CD14-positive monocyte (primary cell): ENCODE measurements at regions of chr13 and their contacts with region 1.

Region 1: DNA sequence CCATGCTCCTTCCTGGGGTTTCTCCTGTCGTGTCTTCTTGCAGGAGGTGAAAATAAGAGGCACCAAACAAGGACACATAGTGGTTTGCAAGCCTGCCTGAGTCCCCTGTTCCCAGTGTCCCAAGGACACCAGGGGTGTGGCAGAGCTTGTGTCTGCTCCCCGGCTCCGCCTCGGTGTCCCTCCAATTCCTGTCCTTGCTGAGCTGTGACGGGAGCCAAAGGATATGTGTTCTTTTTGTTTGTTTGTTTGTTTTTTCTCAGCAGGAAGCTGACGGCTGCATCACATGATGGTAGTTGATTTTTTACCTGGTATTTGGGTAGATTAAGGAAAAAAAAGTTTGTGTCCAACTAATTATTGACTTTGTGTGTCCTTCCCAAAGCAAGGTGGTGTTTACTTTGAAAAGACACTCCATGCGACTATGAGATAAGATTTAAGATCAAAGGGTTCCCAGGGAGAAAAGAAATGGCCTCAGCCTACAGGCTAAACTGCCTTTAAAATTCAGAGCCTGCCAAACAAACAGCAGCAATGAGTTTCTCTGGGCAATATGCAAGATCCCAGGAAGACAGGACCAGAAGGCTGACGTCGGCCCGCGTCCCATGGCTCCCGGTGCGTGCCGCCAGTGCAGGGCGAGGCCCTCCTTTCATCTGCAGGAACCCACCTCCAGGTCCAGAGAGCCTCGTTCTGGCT is 50.8 kb upstream of the XPO4 start:
- DNase-seq: no peak
- H3K4me3 ChIP-seq: no peak overlapping the region
- H3K4me3 Mint-ChIP-seq: no peak overlapping the region
- H3K27ac ChIP-seq: no peak overlapping the region
- H3K27ac Mint-ChIP-seq: no peak overlapping the region
- H3K4me1 ChIP-seq: no peaks in the 10 kb centered on the region
- H3K4me1 Mint-ChIP-seq: peaks cover 11% of the 10 kb centered on the region
- H3K27me3 ChIP-seq: no peaks in the 10 kb centered on the region
- H3K27me3 Mint-ChIP-seq: peaks cover 0 to 3% (median 2%) of the 10 kb centered on the region in 3 donors
- CTCF ChIP-seq: no peak

Region 2: GRCh38 chr13:21043898-21044297 is 90.5 kb after region 1 on chr13:
- intact Hi-C with region 1: loop called in 1 of 2 experiments (anchors 10 kb)
- DNase-seq: no peak
- H3K4me3 ChIP-seq: no peak overlapping the region
- H3K4me3 Mint-ChIP-seq: no peak overlapping the region
- H3K27ac ChIP-seq: no peak overlapping the region
- H3K27ac Mint-ChIP-seq: peak overlapping the region in 1 of 7 donors; percentile 84
- H3K4me1 ChIP-seq: peaks cover 49 to 71% of the 10 kb centered on the region in 2 donors
- H3K4me1 Mint-ChIP-seq: peaks cover 77% of the 10 kb centered on the region
- H3K27me3 ChIP-seq: no peaks in the 10 kb centered on the region
- H3K27me3 Mint-ChIP-seq: peaks cover 0 to 3% (median 0%) of the 10 kb centered on the region in 3 donors
- CTCF ChIP-seq: no peak